ENCODE measurements at regions of chr12 and their contacts with region 1.

Region 1: DNA sequence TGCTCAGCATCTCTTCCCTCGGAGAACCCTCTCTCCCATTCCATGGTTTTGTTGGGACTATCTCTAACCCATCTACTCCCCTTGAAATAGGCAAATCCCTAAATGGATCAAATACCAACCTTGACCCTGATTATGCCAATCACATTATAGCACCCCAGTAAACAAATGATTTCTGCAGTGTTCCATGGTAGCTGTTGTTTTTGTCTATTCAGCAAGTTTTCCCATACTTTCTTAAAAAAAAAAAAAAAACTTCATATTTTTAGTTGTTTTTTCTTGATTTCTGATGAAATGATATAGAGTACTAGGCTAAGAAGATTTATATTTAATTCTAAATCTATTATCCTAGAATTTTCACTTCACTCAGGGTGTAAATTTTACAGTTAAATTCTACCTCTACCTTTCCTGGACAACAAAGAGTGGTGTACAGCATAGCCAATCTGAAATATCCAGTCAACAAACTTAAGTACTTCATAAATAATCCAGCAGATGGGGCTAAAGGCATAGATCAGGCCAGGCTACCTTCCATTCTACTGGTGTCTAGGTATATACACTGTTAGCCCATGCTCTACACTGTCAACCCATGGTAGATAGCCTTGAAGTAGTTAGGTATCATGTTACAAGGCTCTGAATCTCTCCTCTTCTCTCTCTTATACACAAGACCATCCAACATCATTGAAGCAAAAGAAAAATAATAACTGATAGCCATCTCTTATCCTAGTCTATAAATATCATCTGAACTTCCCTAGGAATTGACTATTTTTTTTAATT is 82.2 kb downstream of the PLEKHG7 start:
- DNase-seq: no peak
- ATAC-seq: peak; percentile 91

Region 2: GRCh38 chr12:92928962-92929915 is 144.3 kb after region 1 on chr12 and contains the start of gene EEA1:
- intact Hi-C with region 1: loop called (anchors 5 kb)
- DNase-seq: peak; percentile 99
- ATAC-seq: peak; percentile 97
- total RNA-seq, gene EEA1: 25.8 TPM

Region 3: GRCh38 chr12:93419388-93420034 is 634.5 kb after region 1 on chr12:
- intact Hi-C with region 1: loop called (anchors 2 kb)
- DNase-seq: no peak
- ATAC-seq: peak; percentile 49